Cardiac septum (tissue), 1 donor: ENCODE measurements at regions of chr2 and their contacts with region 1.

Region 1: GRCh38 chr2:219430633-219431615 is 3.7 kb upstream of the SPEG start:
- DNase-seq: no peak

Region 2: GRCh38 chr2:219452838-219453317 is 22.0 kb after region 1 on chr2:
- intact Hi-C with region 1: loop called (anchors 2 kb)
- DNase-seq: peak; percentile 78